Heart right ventricle (tissue), 16 donors: ENCODE measurements at regions of chr10 and their contacts with region 1.

Region 1: GRCh38 chr10:28663576-28664313 is 13.6 kb upstream of the BAMBI start:
- DNase-seq: peak; percentile 74 to 79
- ATAC-seq: peak; percentile 77 to 92 (median 90)
- H3K4me3 ChIP-seq: no peak overlapping the region
- H3K27ac ChIP-seq: no peak overlapping the region
- H3K4me1 ChIP-seq: peaks cover 0 to 14% (median 4%) of the 10 kb centered on the region in 9 donors
- H3K27me3 ChIP-seq: peaks cover 0 to 29% (median 4%) of the 10 kb centered on the region in 7 donors
- CTCF ChIP-seq: peak; percentile 93 to 98 (median 96)

Region 2: DNA sequence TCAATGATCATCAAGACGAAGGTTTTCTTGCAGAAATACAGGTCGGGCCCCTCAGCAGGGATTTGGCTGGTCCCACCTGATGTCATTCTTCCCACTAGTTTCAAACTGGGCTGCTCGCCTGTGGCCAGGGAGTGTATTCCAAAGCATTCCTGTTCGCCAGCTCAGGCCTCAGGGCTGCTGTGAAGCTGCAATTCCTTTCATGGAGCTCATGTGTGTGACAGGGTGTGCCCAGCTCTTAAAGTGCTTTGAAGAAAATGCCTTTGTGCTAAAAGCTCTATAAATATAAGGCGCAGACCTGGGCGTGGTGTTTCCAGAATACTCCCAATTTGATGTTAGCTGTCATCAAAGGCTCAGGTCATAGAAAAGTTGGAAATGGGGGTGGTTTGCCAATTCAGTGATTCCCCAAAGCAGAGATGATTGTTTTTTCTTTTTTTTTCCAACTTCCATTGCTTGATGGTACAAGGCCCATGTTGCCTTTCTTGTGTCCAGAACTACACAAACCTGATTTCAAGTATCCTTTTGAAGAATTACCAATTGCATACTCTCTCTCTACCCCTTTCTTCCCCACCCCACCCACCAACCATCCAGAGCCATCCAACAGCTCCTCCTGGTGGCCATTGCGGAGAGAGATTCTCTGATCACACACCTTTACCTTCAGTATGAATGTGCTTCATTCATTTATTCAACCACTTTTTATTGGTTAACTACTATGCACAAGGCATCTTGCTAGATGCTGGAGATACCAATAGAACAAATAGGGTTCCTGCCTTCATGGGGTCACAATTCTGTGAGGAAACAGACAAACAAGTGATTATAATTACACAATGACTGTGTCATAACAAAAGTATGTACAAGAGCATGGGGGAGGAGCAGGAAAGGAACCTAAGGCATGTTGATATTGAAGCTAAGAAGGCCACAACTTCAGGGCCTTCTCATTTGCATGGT is 327.9 kb after region 1 on chr10:
- intact Hi-C with region 1: loop called in 3 of 10 experiments (anchors 2 to 5 kb)
- DNase-seq: peak; percentile 32 to 35
- ATAC-seq: peak; percentile 57 to 97 (median 86)
- H3K4me3 ChIP-seq: no peak overlapping the region
- H3K27ac ChIP-seq: peak overlapping the region in 4 of 10 donors; percentile 39 to 68 (median 44)
- H3K4me1 ChIP-seq: peaks cover 0 to 9% (median 0%) of the 10 kb centered on the region in 9 donors
- H3K27me3 ChIP-seq: no peaks in the 10 kb centered on the region
- CTCF ChIP-seq: peak; percentile 30 to 80 (median 68)

Region 3: GRCh38 chr10:29120237-29120636 is 456.5 kb after region 1 on chr10:
- intact Hi-C with region 1: loop called in 5 of 10 experiments (anchors 5 to 10 kb)
- DNase-seq: no peak
- ATAC-seq: no peak
- H3K4me3 ChIP-seq: no peak overlapping the region
- H3K27ac ChIP-seq: no peak overlapping the region
- H3K4me1 ChIP-seq: no peaks in the 10 kb centered on the region
- H3K27me3 ChIP-seq: no peaks in the 10 kb centered on the region
- CTCF ChIP-seq: no peak

Region 4: GRCh38 chr10:29127037-29127700 is 463.4 kb after region 1 on chr10:
- intact Hi-C with region 1: loop called in 9 of 10 experiments (anchors 2 to 10 kb)
- DNase-seq: no peak
- ATAC-seq: no peak
- H3K4me3 ChIP-seq: no peak overlapping the region
- H3K27ac ChIP-seq: no peak overlapping the region
- H3K4me1 ChIP-seq: peaks cover 0 to 7% (median 4%) of the 10 kb centered on the region in 9 donors
- H3K27me3 ChIP-seq: peaks cover 0 to 5% (median 0%) of the 10 kb centered on the region in 7 donors
- CTCF ChIP-seq: no peak

Region 5: GRCh38 chr10:29131952-29132820 is 468.4 kb after region 1 on chr10:
- intact Hi-C with region 1: loop called in 9 of 10 experiments (anchors 2 to 10 kb)
- DNase-seq: peak in 1 of 2 donors; percentile 49
- ATAC-seq: peak; percentile 51 to 88 (median 69)
- H3K4me3 ChIP-seq: peak overlapping the region in 1 of 10 donors; percentile 30
- H3K27ac ChIP-seq: peak overlapping the region in 5 of 10 donors; percentile 2 to 39 (median 20)
- H3K4me1 ChIP-seq: peaks cover 0 to 18% (median 14%) of the 10 kb centered on the region in 9 donors
- H3K27me3 ChIP-seq: no peaks in the 10 kb centered on the region
- CTCF ChIP-seq: no peak